PC-9 (cell line): ENCODE measurements at regions of chrX and their contacts with region 1.

Region 1: GRCh38 chrX:56764153-56764974 is 35.3 kb downstream of the NBDY start:
- DNase-seq: peak; percentile 48 to 78
- H3K4me3 ChIP-seq: no peak overlapping the region
- H3K27ac ChIP-seq: no peak overlapping the region
- H3K4me1 ChIP-seq: no peaks in the 10 kb centered on the region
- H3K27me3 ChIP-seq: no peaks in the 10 kb centered on the region
- CTCF ChIP-seq: peak; percentile 65

Region 2: GRCh38 chrX:56798866-56799758 is 34.7 kb after region 1 on chrX:
- CTCF ChIA-PET with region 1: no interaction called
- POLR2A ChIA-PET with region 1: no interaction called
- intact Hi-C with region 1: no loop called
- DNase-seq: no peak
- H3K4me3 ChIP-seq: no peak overlapping the region
- H3K27ac ChIP-seq: no peak overlapping the region
- H3K4me1 ChIP-seq: no peaks in the 10 kb centered on the region
- H3K27me3 ChIP-seq: no peaks in the 10 kb centered on the region
- CTCF ChIP-seq: no peak

Region 3: DNA sequence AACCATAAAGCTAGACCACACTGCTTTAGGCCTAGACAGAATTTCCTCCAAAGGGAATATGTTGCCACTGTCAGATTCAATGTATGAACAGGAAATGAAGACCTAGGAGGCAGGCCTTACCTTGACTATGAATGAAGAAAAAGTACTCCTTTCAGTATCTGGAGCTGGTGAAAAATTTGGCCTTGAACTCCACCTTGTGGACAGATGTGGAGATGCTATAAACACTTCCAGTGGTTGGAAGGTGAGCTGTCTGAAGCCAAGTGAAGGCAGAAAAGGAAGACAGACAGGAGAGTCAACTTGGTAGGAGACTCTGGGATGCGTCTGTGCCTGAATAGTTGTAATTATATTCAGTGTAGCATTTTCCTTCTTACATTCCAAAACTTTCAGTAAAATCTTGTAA is 213.8 kb after region 1 on chrX:
- CTCF ChIA-PET with region 1: interaction called, 4 read pairs
- POLR2A ChIA-PET with region 1: no interaction called
- intact Hi-C with region 1: loop called (anchors 10 kb)
- DNase-seq: peak in 1 of 2 experiments; percentile 62
- H3K4me3 ChIP-seq: no peak overlapping the region
- H3K27ac ChIP-seq: no peak overlapping the region
- H3K4me1 ChIP-seq: peaks cover 9% of the 10 kb centered on the region; the same call in 1 of the 2 replicates
- H3K27me3 ChIP-seq: no peaks in the 10 kb centered on the region
- CTCF ChIP-seq: peak; percentile 72

Region 4: GRCh38 chrX:57156397-57157049 is 392.2 kb after region 1 on chrX:
- CTCF ChIA-PET with region 1: no interaction called
- POLR2A ChIA-PET with region 1: no interaction called
- intact Hi-C with region 1: loop called (anchors 10 kb)
- DNase-seq: peak in 1 of 2 experiments; percentile 33
- H3K4me3 ChIP-seq: no peak overlapping the region
- H3K27ac ChIP-seq: no peak overlapping the region
- H3K4me1 ChIP-seq: no peaks in the 10 kb centered on the region
- H3K27me3 ChIP-seq: no peaks in the 10 kb centered on the region
- CTCF ChIP-seq: peak; percentile 67

Region 5: GRCh38 chrX:57821703-57822375 is 1057.5 kb after region 1 on chrX:
- CTCF ChIA-PET with region 1: no interaction called
- POLR2A ChIA-PET with region 1: no interaction called
- intact Hi-C with region 1: loop called (anchors 10 kb)
- DNase-seq: peak in 1 of 2 experiments; percentile 6
- H3K4me3 ChIP-seq: peak overlapping the region; percentile 13; the same call in 1 of the 2 replicates
- H3K27ac ChIP-seq: no peak overlapping the region
- H3K4me1 ChIP-seq: no peaks in the 10 kb centered on the region
- H3K27me3 ChIP-seq: no peaks in the 10 kb centered on the region
- CTCF ChIP-seq: peak; percentile 75

Region 6: GRCh38 chrX:58025979-58026378 is 1261.6 kb after region 1 on chrX:
- CTCF ChIA-PET with region 1: no interaction called
- POLR2A ChIA-PET with region 1: no interaction called
- intact Hi-C with region 1: loop called (anchors 10 kb)
- DNase-seq: peak in 1 of 2 experiments; percentile 8
- H3K4me3 ChIP-seq: no peak overlapping the region
- H3K27ac ChIP-seq: no peak overlapping the region
- H3K4me1 ChIP-seq: no peaks in the 10 kb centered on the region
- H3K27me3 ChIP-seq: no peaks in the 10 kb centered on the region
- CTCF ChIP-seq: peak; percentile 66